AG04450 (cell line): ENCODE measurements at regions of chr3 and their contacts with region 1.

Region 1: DNA sequence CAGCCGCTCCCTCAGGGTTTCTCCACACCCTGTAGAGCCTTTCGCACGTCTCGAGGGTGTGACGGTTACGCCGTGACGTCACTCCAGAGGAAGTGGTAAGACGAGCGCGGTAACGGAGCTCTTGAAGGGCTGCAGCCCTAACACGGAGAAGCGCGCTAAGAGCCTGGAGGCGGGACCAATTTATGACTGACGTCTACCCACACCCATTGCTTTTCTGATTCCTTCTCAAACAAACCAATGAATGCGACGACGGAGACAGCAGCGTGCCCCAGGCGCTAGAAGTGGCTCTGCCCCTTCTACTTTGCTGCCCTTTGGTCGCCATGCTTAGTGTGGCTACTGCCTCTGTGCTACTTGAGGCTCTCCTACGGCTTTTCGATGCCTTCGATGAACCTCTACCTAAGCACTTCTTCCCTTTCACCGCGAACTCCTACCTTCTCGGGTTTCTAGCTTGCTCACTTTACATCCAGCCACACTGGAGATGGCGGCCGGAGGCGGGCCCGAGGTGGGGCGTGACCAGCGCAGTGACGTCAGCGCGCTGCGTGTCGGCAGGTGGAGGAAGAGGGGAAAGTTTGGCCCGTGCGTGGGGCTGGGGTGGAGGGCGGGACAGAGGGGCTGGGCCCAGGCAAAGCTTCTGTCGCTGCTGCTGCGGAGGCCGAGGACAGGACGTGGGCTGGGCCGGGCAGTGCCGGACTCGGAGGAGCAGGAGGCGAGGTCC is at the start of gene OXSR1:
- DNase-seq: peak; percentile 99
- H3K4me3 ChIP-seq: peak within 1 kb of the TSS; percentile 87
- H3K27ac ChIP-seq: peak within 1 kb of the TSS; percentile 89
- H3K27me3 ChIP-seq: no peaks in the 10 kb centered on the region
- CTCF ChIP-seq: 0 out of 2 replicates have a peak, but pooled peaks have one; percentile 2
- polyA plus RNA-seq, gene OXSR1: 34.7 and 42.3 TPM in 2 replicates

Region 2: GRCh38 chr3:37967260-37967881 is 197.8 kb before region 1 on chr3:
- CTCF ChIA-PET with region 1: no interaction called
- POLR2A ChIA-PET with region 1: no interaction called
- DNase-seq: peak; percentile 46
- H3K4me3 ChIP-seq: no peak overlapping the region
- H3K27ac ChIP-seq: no peak overlapping the region
- H3K27me3 ChIP-seq: no peaks in the 10 kb centered on the region
- CTCF ChIP-seq: peak; percentile 92

Region 3: DNA sequence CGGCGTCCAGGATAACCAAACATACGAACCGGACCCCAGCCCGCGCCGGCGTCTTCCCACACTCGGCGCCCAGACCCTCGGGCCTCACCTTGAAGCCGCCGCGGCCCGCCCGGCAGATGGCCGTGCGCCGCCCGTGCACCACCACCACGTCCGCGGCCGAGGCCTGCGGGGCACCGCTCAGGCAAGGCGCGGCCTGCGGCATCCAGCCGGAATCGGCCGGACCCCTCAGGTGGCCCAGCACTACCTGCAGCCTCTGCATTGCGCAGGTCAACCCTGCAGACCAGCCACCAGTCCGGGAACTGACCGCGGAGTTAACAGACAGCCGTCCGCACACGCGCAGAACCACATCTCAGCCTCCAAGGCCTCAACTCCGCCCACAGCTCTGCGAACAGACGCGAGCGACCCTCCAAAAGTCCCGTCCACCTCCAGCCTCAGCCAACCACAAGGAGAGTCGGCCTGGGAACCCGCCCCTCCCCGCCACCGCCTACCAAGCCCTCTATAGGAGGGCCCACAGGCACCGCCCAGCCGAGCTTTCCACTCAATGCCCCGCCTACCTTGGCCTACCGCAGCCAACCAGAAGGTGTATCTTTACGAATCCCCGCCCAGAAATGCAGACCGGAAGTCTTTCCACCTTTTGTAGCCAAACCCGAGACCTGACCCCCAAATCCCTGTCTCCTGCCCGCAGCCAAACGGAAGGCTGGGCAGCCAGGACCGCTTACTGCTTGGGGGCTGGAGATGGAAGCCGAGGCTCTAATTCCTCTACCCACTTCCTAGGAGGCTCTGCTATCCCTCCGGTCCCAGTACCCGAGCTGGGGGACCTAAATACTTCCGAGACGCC is 28.1 kb before region 1 on chr3 and contains the start of gene ACAA1:
- CTCF ChIA-PET with region 1: no interaction called
- POLR2A ChIA-PET with region 1: interaction called, 27 read pairs
- DNase-seq: peak; percentile 97
- H3K4me3 ChIP-seq: peak within 1 kb of the TSS; percentile 88
- H3K27ac ChIP-seq: peak within 1 kb of the TSS; percentile 89
- H3K27me3 ChIP-seq: no peaks in the 10 kb centered on the region
- CTCF ChIP-seq: no peak
- polyA plus RNA-seq, gene ACAA1: 47.6 and 50.9 TPM in 2 replicates